Calu3 (cell line): ENCODE measurements at regions of chr17 and their contacts with region 1.

Region 1: DNA sequence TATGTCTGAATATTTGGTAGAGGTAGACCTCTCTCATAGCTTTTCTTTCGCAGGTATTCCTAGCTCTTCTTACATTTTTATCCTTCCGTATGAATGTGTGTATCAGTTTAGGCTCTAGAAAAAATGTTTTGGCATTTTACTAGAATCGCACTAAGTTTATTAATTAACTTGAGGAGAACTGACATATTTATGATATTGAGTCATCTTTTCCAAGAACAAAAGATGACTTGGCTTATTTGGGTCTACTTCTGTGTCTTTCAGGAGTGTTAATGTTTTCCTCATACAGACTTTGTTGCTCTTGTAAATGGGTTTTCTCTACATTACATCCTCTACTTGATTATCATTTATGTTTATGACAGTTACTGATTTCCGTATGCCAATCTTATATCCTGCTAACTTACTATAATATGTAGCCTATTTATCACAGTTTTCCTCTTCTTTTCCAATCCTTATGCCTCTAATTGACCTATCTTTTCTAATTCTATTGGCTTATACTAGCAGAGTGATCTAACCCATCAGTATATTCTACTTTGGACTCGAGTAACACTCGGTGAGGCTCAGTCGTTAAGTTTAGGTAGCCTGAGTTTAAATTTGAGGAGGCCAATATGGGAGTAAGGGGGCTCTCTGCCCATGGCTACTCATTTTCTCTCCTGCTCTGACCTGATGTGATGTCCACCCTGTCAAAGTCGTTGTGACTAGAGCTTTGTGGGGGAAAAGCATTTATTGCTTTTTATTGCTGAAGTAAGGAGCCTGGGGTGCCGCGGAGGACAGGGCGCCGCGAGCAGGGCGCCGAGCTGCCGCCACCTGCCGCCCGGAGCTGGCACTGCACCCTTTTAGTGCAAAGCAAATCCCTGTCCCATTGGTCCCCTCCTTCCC is 20.0 kb downstream of the ST6GALNAC1 start:
- DNase-seq: peak; percentile 87
- H3K4me3 Mint-ChIP-seq: peak overlapping the region; percentile 17
- H3K27ac Mint-ChIP-seq: peak overlapping the region; percentile 81
- H3K4me1 Mint-ChIP-seq: peaks cover 14% of the 10 kb centered on the region
- H3K27me3 Mint-ChIP-seq: no peaks in the 10 kb centered on the region
- CTCF ChIP-seq: peak; percentile 90

Region 2: GRCh38 chr17:76523084-76524037 is 100.1 kb before region 1 on chr17:
- CTCF ChIA-PET with region 1: interaction called, 7 read pairs
- intact Hi-C with region 1: loop called (anchors 5 kb)
- DNase-seq: peak; percentile 88
- H3K4me3 Mint-ChIP-seq: no peak overlapping the region
- H3K27ac Mint-ChIP-seq: no peak overlapping the region
- H3K4me1 Mint-ChIP-seq: peaks cover 23% of the 10 kb centered on the region
- H3K27me3 Mint-ChIP-seq: peaks cover 47% of the 10 kb centered on the region
- CTCF ChIP-seq: peak; percentile 97

Region 3: GRCh38 chr17:76557368-76558197 is 65.9 kb before region 1 on chr17:
- CTCF ChIA-PET with region 1: interaction called, 11 read pairs
- intact Hi-C with region 1: loop called (anchors 1 kb)
- DNase-seq: peak; percentile 97
- H3K4me3 Mint-ChIP-seq: peak overlapping the region; percentile 91
- H3K27ac Mint-ChIP-seq: peak overlapping the region; percentile 97
- H3K4me1 Mint-ChIP-seq: peaks cover 8% of the 10 kb centered on the region
- H3K27me3 Mint-ChIP-seq: no peaks in the 10 kb centered on the region
- CTCF ChIP-seq: peak; percentile 69

Region 4: DNA sequence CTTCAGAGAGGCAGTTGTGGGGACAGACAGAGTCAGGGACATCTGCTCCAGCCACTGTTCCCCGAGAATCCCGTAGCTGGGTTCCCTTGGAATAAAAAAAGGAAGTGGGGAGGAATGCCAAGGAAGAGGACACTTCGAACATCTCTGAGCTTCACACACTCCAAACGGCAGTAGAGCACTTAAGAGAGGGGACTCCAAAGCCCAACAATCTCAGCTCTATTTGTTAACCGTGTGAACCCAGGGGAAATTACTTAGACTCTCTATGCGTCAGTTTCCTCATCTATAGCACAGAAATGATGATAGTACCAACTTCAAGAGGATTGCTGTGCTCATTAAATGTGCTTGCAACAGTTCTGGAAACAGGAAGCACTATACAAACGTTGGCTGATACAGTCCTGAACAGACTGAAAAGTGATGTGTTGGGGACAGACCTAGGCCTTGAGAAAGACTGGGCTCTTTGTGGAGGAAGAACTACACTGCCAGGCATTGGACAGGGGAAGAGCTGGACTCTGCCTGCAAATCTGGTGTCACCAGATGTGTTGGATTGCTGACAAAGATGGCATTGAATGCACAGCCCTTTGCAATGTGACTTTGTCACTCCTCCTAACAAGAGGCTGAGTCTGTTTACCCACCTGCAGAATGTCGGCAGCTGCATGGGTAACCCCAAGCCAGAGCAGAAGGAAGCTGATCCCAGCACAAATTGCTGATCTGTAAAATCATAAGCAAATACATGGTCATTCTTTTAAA is 25.6 kb before region 1 on chr17:
- CTCF ChIA-PET with region 1: interaction called, 11 read pairs
- intact Hi-C with region 1: no loop called
- DNase-seq: no peak
- H3K4me3 Mint-ChIP-seq: no peak overlapping the region
- H3K27ac Mint-ChIP-seq: peak overlapping the region; percentile 81
- H3K4me1 Mint-ChIP-seq: peaks cover 63% of the 10 kb centered on the region
- H3K27me3 Mint-ChIP-seq: no peaks in the 10 kb centered on the region
- CTCF ChIP-seq: no peak

Region 5: GRCh38 chr17:76671123-76671911 is 47.8 kb after region 1 on chr17:
- CTCF ChIA-PET with region 1: interaction called, 13 read pairs
- intact Hi-C with region 1: no loop called
- DNase-seq: peak; percentile 99
- H3K4me3 Mint-ChIP-seq: peak overlapping the region; percentile 82
- H3K27ac Mint-ChIP-seq: peak overlapping the region; percentile 81
- H3K4me1 Mint-ChIP-seq: peaks cover 31% of the 10 kb centered on the region
- H3K27me3 Mint-ChIP-seq: no peaks in the 10 kb centered on the region
- CTCF ChIP-seq: no peak

Region 6: GRCh38 chr17:76681222-76682137 is 58.0 kb after region 1 on chr17:
- CTCF ChIA-PET with region 1: interaction called, 16 read pairs
- intact Hi-C with region 1: no loop called
- DNase-seq: peak; percentile 85
- H3K4me3 Mint-ChIP-seq: no peak overlapping the region
- H3K27ac Mint-ChIP-seq: no peak overlapping the region
- H3K4me1 Mint-ChIP-seq: peaks cover 6% of the 10 kb centered on the region
- H3K27me3 Mint-ChIP-seq: no peaks in the 10 kb centered on the region
- CTCF ChIP-seq: peak; percentile 68